ENCODE measurements at regions of chr2 and their contacts with region 1.

Region 1: DNA sequence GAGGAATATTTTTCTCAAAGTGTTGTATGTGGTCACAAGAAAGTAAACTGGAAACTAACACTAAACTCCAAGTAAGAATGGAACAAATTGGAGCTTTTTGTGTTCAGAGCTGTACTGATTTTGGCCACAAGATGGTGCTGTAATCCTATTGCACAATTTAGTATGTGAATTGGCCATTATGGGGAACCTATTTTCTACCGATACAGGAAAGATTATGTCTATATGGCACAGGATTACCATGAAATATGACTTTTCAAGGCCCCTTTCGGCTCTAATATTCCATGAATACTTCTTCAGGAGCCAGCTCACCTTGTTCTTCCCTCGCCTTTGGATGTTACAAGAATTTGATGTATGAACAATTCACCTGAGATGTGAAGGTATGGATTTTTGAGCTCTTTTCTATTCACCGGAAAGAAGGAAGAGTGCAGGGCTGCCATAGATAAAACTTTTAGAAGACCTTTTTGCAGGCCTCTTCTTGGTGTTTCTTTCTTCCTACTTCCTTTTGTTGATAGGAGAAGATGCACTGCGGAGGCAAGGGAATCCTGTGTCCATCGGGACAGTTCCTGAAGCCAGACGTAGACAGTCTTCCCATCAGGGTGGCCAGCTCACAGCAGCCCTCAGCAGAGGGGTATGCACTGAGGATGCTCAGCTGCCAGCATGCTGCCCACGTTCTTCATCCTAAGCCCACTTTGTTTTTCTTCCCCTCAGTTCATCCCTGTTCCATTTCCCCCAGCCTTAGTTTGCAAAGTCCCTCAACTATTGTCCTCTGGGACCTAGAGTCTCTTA is 13.3 kb downstream of the MRPL44 start:
- DNase-seq: peak; percentile 76
- ATAC-seq: peak; percentile 83
- H3K4me3 Mint-ChIP-seq: no peak overlapping the region
- H3K27ac Mint-ChIP-seq: no peak overlapping the region
- H3K4me1 Mint-ChIP-seq: peaks cover 6% of the 10 kb centered on the region
- H3K27me3 Mint-ChIP-seq: no peaks in the 10 kb centered on the region

Region 2: GRCh38 chr2:223727562-223727961 is 243.0 kb before region 1 on chr2:
- CTCF ChIA-PET with region 1: interaction called, 21 read pairs
- POLR2A ChIA-PET with region 1: no interaction called
- DNase-seq: peak; percentile 64
- ATAC-seq: peak; percentile 70
- H3K4me3 Mint-ChIP-seq: no peak overlapping the region
- H3K27ac Mint-ChIP-seq: no peak overlapping the region
- H3K4me1 Mint-ChIP-seq: no peaks in the 10 kb centered on the region
- H3K27me3 Mint-ChIP-seq: peaks cover 5% of the 10 kb centered on the region

Region 3: DNA sequence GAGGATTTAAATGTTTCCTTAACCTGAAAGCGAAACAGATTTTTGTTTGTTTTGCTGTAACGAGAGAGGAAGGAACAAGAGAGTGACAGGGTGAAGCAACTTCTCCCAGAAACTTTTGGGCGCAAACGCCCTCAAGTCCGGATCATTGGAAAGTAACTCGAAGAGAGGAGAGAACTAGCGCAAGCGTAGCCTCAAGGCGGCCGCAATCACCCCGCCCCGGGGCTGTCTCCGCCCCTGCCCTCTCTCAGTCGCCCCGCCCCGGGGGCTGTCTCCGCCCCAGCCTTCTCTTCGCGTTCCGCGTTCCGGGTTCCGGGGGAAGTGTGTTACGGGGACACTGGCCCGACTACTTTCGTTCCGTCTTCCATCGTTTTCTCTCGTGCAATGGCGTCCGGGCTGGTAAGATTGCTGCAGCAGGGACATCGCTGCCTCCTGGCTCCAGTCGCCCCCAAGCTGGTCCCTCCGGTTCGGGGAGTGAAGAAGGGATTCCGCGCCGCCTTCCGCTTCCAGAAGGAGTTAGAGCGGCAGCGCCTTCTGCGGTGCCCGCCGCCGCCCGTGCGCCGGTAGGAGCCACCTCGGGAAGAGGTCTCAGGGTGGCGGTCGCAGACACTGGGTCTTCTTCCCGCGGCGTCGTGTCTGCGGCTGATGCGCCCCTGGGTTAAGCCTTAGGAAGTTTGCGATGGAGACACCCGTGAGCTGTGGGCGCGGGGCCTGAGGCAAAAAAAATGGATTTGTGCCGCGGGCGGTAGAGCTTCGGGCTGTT is 13.3 kb before region 1 on chr2 and contains the start of gene MRPL44:
- CTCF ChIA-PET with region 1: interaction called, 52 read pairs
- POLR2A ChIA-PET with region 1: interaction called, 3 read pairs
- DNase-seq: peak; percentile 97
- ATAC-seq: peak; percentile 99
- H3K4me3 Mint-ChIP-seq: peak within 1 kb of the TSS; percentile 96
- H3K27ac Mint-ChIP-seq: peak within 1 kb of the TSS; percentile 94
- H3K4me1 Mint-ChIP-seq: peaks cover 58% of the 10 kb centered on the region
- H3K27me3 Mint-ChIP-seq: no peaks in the 10 kb centered on the region
- total RNA-seq, gene MRPL44: 29.0 to 30.5 TPM

Region 4: GRCh38 chr2:224062481-224063297 is 92.2 kb after region 1 on chr2:
- CTCF ChIA-PET with region 1: interaction called, 26 read pairs
- POLR2A ChIA-PET with region 1: no interaction called
- DNase-seq: no peak
- ATAC-seq: no peak
- H3K4me3 Mint-ChIP-seq: no peak overlapping the region
- H3K27ac Mint-ChIP-seq: no peak overlapping the region
- H3K4me1 Mint-ChIP-seq: no peaks in the 10 kb centered on the region
- H3K27me3 Mint-ChIP-seq: peaks cover 11% of the 10 kb centered on the region

Region 5: DNA sequence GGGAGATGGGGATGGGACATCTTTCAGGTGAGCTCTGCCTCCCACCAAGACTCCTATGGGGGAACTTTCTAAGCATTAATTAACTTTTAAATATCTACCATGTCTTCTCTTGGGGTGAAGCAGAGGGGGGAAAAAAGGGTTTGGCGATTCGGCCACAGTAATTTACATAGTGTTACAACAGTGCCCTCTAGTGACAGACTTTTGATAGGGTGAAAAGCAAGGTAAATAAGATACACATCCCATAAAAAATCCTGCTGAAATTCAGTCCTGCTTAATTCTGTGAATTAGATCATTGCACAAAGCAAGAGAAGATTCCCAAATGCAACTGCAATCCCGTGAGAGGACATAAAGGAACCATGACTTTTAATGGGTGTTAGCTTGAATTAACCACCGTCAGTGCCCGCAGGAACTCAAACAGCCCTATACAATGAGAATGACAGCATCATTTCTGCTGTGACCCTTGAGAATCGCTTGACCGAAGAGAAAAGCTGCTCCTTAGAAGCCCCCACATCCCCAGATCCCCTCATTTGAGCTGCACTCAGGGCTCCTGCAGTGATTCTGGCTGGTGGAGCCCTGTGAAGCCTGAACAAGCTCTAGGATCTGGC is 398.6 kb after region 1 on chr2:
- CTCF ChIA-PET with region 1: interaction called, 10 read pairs
- POLR2A ChIA-PET with region 1: no interaction called
- DNase-seq: peak; percentile 34
- ATAC-seq: no peak
- H3K4me3 Mint-ChIP-seq: no peak overlapping the region
- H3K27ac Mint-ChIP-seq: no peak overlapping the region
- H3K4me1 Mint-ChIP-seq: no peaks in the 10 kb centered on the region
- H3K27me3 Mint-ChIP-seq: peaks cover 4% of the 10 kb centered on the region

Region 6: GRCh38 chr2:224837558-224837957 is 867.0 kb after region 1 on chr2:
- CTCF ChIA-PET with region 1: no interaction called
- POLR2A ChIA-PET with region 1: no interaction called
- DNase-seq: no peak
- ATAC-seq: no peak
- H3K4me3 Mint-ChIP-seq: no peak overlapping the region
- H3K27ac Mint-ChIP-seq: no peak overlapping the region
- H3K4me1 Mint-ChIP-seq: no peaks in the 10 kb centered on the region
- H3K27me3 Mint-ChIP-seq: no peaks in the 10 kb centered on the region

Measured in activated CD8-positive, alpha-beta T cell treated with anti-CD3 and anti-CD28 coated beads, Interleukin-2, amount 10 ng/mL, durations not matched to agents 7 days and 5 days (primary cell).